ENCODE measurements at regions of chr2 and their contacts with region 1.

Region 1: DNA sequence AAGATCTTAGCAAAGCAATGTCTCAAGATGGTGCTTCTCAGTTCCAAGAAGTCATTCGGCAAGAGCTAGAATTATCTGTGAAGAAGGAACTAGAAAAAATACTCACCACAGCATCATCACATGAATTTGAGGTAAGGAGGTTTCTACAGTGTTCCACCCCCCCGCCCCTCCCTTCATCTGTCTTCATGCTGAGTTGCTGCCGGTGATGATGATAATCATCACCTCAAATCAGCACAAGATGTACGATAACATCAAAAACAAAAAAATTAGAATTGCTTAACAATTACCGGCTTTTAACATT is 14.6 kb downstream of the UGP2 start:
- DNase-seq: peak; percentile 58 to 91 (median 86)
- H3K4me3 ChIP-seq: peak overlapping the region in 4 of 7 experiments; percentile 14 to 55 (median 36)
- H3K27ac ChIP-seq: peak overlapping the region; percentile 27 to 83
- H3K4me1 ChIP-seq: peaks cover 29 to 63% (median 42%) of the 10 kb centered on the region in 4 experiments
- H3K27me3 ChIP-seq: no peaks in the 10 kb centered on the region

Region 2: DNA sequence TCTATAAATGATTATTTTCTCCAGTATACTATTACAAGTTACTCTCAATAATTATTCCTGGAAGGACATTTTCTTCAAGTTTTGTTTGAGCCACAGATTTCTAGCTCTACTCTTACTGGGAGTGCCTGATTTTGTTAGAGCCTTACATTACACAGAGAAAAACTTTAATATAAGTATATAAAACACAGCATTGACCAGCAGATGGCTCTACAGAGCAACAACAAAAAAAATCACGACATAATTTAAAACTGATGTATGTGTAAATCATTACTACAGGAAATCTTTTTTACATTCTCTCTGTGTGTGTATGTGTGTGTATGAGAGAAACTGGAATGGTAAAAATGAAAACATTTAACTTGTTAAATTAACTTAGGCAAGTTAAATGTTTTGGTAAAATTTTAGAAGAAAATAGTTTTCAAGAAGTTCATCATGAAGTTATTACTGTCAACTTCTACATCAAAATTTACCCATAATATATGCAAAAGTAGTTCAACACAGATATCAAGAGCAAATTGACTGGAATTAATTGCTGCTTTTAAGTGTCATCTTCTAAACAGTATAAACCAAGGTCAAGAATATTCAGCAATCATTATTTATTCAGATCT is 164.1 kb before region 1 on chr2:
- CTCF ChIA-PET with region 1: interaction called, 106 read pairs
- POLR2A ChIA-PET with region 1: interaction called, 3 read pairs
- DNase-seq: peak; percentile 52 to 74 (median 69)
- H3K4me3 ChIP-seq: no peak overlapping the region
- H3K27ac ChIP-seq: no peak overlapping the region
- H3K4me1 ChIP-seq: no peaks in the 10 kb centered on the region
- H3K27me3 ChIP-seq: no peaks in the 10 kb centered on the region

Region 3: DNA sequence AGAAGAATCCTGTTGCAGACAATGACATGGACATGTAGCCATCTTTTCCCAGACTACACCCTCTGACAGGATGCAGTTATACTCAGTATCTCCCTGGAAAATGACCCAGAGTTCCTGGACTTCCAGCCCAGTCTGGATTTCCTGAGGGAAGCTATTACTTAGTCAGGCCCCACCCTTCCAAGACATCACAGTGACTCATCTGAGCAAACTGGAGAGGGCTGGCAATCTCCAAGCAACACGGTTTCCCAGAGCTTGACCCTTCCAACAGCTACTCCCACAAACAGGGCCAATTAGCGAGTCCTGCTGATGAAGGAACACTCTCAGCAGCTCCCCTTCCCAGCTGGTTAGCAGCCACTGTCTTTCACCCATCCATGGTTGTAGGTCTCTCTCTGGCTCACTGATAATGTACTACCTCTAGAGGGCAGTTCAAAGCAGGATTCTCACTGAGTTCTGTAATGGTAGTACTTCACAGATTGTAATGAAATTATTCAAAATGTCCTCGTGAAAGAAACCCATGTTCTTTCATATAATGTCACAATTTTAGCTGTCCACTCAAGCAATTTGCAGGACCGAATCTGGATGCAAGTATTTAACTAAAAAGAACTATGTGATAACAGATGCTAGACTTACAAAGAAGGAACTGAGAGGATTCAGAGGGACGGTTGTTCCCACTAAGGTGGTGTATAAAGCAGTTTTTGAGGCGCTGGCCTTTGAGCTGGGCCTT is 157.3 kb before region 1 on chr2:
- CTCF ChIA-PET with region 1: interaction called, 106 read pairs
- POLR2A ChIA-PET with region 1: interaction called, 3 read pairs
- DNase-seq: peak; percentile 26 to 51 (median 41)
- H3K4me3 ChIP-seq: no peak overlapping the region
- H3K27ac ChIP-seq: no peak overlapping the region
- H3K4me1 ChIP-seq: no peaks in the 10 kb centered on the region
- H3K27me3 ChIP-seq: no peaks in the 10 kb centered on the region

Region 4: DNA sequence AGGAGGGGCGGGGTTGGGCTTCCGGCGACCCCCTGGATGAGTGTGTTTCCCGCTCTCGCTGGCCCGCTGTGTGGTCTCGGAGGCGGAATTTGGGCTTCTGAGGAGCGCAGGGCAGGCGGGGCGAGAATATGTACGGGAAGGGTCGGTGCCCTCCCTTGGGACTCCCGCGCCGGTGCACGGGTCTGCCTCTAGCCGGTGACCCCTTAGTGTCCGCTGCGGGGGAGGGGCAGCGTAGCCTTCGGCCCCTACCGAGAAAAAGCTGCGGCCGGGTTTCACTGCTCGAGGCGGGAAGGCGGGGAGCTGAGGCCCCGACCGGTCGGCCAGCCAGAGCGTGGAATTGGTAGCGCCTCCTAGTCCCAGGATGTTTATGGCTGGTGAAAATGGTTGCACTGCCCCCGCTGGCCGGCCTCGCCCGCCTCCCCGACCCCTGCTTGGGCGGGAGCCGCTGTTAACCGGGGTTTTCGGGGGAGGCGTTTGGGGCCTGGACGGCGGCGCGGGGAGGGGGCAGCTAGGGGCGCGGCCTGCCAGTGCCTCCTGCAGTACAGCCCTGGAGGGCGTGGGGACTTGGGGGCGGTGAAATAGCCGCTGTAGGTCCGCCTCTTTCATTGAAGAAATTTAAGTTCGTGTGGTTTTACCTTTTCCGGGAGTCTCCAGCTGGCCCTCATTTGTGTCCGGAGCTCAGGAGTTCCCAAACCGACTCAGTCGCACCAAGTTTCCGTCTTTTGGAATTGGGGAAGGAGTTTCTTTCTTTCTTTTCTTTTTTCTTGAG is 14.8 kb before region 1 on chr2 and contains the start of gene UGP2:
- CTCF ChIA-PET with region 1: interaction called, 103 read pairs
- POLR2A ChIA-PET with region 1: interaction called, 43 read pairs
- DNase-seq: peak; percentile 92 to 98 (median 96)
- H3K4me3 ChIP-seq: peak within 1 kb of the TSS; percentile 76 to 97 (median 96)
- H3K27ac ChIP-seq: peak within 1 kb of the TSS; percentile 79 to 93
- H3K4me1 ChIP-seq: peaks cover 26 to 46% (median 27%) of the 10 kb centered on the region in 4 experiments
- H3K27me3 ChIP-seq: no peaks in the 10 kb centered on the region

Measured in common myeloid progenitor, CD34-positive (primary cell).